Activated CD8-positive, alpha-beta T cell treated with anti-CD3 and anti-CD28 coated beads, Interleukin-2, amount 10 ng/mL, durations not matched to agents 7 days and 5 days (primary cell): ENCODE measurements at regions of chr1 and their contacts with region 1.

Region 1: GRCh38 chr1:26787706-26788514 is at the start of gene PIGV:
- DNase-seq: peak; percentile 91
- ATAC-seq: peak; percentile 70
- H3K4me3 Mint-ChIP-seq: peak within 1 kb of the TSS; percentile 84
- H3K27ac Mint-ChIP-seq: peak within 1 kb of the TSS; percentile 100
- H3K4me1 Mint-ChIP-seq: peaks cover 84% of the 10 kb centered on the region
- H3K27me3 Mint-ChIP-seq: no peaks in the 10 kb centered on the region
- total RNA-seq, gene PIGV: 19.9 to 20.3 TPM

Region 2: GRCh38 chr1:26459573-26460031 is 328.3 kb before region 1 on chr1:
- CTCF ChIA-PET with region 1: no interaction called
- POLR2A ChIA-PET with region 1: no interaction called
- DNase-seq: no peak
- ATAC-seq: no peak
- H3K4me3 Mint-ChIP-seq: no peak overlapping the region
- H3K27ac Mint-ChIP-seq: no peak overlapping the region
- H3K4me1 Mint-ChIP-seq: no peaks in the 10 kb centered on the region
- H3K27me3 Mint-ChIP-seq: no peaks in the 10 kb centered on the region

Region 3: DNA sequence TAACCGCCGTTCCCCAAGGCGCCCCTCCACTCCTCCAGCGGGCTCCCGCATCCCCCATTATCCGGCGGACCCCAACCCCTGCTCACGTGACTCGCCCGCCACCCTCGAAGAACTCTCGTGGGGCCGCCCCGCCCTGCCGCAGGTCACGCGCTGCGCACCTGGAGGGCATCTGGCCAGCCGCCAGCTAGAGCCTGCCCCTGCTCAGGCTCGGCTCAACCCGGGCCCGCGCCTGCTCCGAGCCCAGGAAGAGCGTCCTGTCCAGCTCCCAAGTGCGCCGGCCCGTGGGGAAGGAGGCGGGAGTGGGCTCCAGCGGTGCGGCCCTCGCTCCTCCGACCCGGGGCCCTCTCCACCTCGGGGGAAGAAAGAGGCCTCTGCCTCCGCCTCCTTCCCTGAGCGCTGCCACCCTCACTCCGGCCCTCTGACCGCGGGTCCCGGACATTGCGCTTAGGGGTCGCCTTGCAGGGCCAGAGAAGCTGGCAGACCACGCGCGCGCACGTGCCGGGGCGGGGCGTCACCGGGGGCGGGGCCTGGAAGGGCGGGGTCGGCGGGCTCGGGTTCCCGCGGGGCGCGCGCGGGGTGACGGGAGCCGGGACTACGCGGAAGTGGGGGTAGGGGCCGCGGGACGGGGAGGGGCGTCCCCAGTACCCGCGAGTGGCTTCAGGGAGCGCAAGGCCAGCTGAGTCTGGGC is 287.3 kb before region 1 on chr1:
- CTCF ChIA-PET with region 1: interaction called, 41 read pairs
- POLR2A ChIA-PET with region 1: interaction called, 12 read pairs
- DNase-seq: peak; percentile 92
- ATAC-seq: peak; percentile 77
- H3K4me3 Mint-ChIP-seq: peak overlapping the region; percentile 86
- H3K27ac Mint-ChIP-seq: peak overlapping the region; percentile 97
- H3K4me1 Mint-ChIP-seq: peaks cover 32% of the 10 kb centered on the region
- H3K27me3 Mint-ChIP-seq: no peaks in the 10 kb centered on the region

Region 4: GRCh38 chr1:26602378-26602959 is 185.4 kb before region 1 on chr1:
- CTCF ChIA-PET with region 1: interaction called, 334 read pairs
- POLR2A ChIA-PET with region 1: interaction called, 32 read pairs
- DNase-seq: peak; percentile 64
- ATAC-seq: peak; percentile 42
- H3K4me3 Mint-ChIP-seq: no peak overlapping the region
- H3K27ac Mint-ChIP-seq: no peak overlapping the region
- H3K4me1 Mint-ChIP-seq: peaks cover 23% of the 10 kb centered on the region
- H3K27me3 Mint-ChIP-seq: peaks cover 17% of the 10 kb centered on the region

Region 5: DNA sequence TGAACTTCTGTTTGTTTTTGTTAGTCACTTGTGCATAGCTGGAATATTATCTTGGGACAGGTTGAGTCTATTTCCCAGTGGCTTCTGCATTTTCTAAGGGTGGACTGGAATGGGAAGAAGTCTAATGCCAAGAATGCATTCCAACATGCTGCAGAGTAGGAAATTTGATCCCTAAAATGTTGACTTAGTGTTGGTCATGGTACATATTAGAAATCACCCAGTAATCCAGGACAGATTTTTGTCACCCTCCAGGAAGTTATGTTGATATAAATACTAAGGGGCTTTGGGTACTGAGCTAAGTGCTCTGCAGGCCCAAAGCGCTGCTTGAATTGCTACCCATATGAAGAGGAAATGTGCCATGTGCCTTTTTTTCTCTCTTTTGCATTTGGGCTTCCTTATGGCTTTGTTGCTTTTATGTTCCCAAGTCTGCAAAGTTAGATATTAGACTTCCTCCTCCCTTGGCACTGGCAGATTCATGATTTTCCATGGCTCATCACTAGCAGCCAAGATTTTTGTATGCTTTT is 82.1 kb before region 1 on chr1:
- CTCF ChIA-PET with region 1: interaction called, 149 read pairs
- POLR2A ChIA-PET with region 1: interaction called, 325 read pairs
- DNase-seq: no peak
- ATAC-seq: no peak
- H3K4me3 Mint-ChIP-seq: peak overlapping the region; percentile 6
- H3K27ac Mint-ChIP-seq: peak overlapping the region; percentile 27
- H3K4me1 Mint-ChIP-seq: peaks cover 27% of the 10 kb centered on the region
- H3K27me3 Mint-ChIP-seq: no peaks in the 10 kb centered on the region

Region 6: DNA sequence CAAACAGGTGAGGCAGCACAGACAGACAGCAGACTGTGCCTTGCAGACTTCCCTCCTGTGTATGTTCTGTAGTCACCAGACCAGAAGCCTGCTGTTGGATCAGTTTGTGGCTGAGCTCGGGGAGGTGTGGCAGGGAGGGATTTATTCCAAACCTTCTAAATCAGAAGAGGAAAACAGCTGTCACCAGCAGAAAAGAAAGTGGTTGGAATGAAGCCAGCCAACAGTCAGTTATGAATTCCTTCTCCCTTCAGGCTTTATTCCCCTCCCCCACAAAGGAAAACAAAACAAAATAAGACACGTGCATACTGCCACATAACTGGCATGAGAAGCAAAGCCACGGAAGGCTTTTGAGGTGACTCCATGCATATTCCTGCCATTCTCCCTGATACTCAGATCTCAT is 19.2 kb before region 1 on chr1:
- CTCF ChIA-PET with region 1: interaction called, 13 read pairs
- POLR2A ChIA-PET with region 1: interaction called, 4 read pairs
- DNase-seq: no peak
- ATAC-seq: no peak
- H3K4me3 Mint-ChIP-seq: no peak overlapping the region
- H3K27ac Mint-ChIP-seq: peak overlapping the region; percentile 29
- H3K4me1 Mint-ChIP-seq: peaks cover 18% of the 10 kb centered on the region
- H3K27me3 Mint-ChIP-seq: no peaks in the 10 kb centered on the region

Region 7: GRCh38 chr1:26826261-26827105 is 38.6 kb after region 1 on chr1 and contains the start of gene ZDHHC18:
- CTCF ChIA-PET with region 1: interaction called, 22 read pairs
- POLR2A ChIA-PET with region 1: interaction called, 8 read pairs
- DNase-seq: peak; percentile 70
- ATAC-seq: peak; percentile 91
- H3K4me3 Mint-ChIP-seq: peak within 1 kb of the TSS; percentile 95
- H3K27ac Mint-ChIP-seq: peak within 1 kb of the TSS; percentile 92
- H3K4me1 Mint-ChIP-seq: peaks cover 55% of the 10 kb centered on the region
- H3K27me3 Mint-ChIP-seq: no peaks in the 10 kb centered on the region
- total RNA-seq, gene ZDHHC18: 47.6 to 50.9 TPM

Region 8: DNA sequence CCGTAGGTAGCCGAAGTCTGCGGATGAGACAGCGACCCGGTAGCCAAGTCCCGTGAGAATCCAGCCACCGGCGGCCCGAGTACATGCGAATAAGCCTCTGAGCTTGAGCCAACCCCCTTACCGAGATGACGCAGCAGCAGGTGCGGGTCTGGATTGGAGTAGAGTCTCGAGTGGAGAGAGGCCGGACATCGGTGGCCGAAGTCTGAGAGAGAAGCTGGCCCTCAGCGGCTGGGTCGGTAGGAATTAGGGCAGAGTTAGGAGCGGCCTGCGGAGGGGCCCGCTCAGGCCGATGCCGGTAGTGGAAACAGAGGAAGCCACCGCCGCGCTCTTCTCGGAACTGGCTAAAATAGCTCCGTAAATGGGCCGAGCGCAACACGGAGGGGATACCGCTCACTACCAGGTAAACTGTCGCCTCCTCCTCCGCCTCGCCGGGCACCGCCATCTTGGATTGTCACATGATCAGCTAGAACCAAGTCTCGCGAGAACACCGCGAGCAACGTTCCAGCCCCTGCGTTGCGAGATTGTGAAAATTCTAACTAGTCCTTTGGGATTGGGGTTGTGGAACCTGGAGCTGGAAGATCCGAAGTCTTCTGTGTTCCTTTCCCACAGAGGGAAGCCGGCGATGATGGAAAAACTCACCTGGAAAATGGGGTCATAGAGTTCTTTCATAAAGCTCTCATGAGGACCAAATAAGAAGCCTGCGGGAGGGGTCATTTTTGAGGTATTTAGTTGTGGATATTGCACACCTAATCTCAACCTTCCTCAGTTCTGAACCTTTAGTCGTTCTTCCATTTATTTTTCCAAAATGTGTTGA is 112.3 kb after region 1 on chr1 and contains the start of gene GPATCH3:
- CTCF ChIA-PET with region 1: interaction called, 4 read pairs
- POLR2A ChIA-PET with region 1: interaction called, 10 read pairs
- DNase-seq: peak; percentile 94
- ATAC-seq: peak; percentile 94
- H3K4me3 Mint-ChIP-seq: peak within 1 kb of the TSS; percentile 78
- H3K27ac Mint-ChIP-seq: peak within 1 kb of the TSS; percentile 95
- H3K4me1 Mint-ChIP-seq: peaks cover 27% of the 10 kb centered on the region
- H3K27me3 Mint-ChIP-seq: no peaks in the 10 kb centered on the region
- total RNA-seq, gene GPATCH3: 14.9 to 16.4 TPM